CD4-positive, alpha-beta T cell (primary cell): ENCODE measurements at regions of chr15 and their contacts with region 1.

Region 1: GRCh38 chr15:31365655-31366127 is 39.1 kb downstream of the KLF13 start:
- DNase-seq: peak; percentile 59 to 90 (median 74)
- ATAC-seq: peak; percentile 51
- H3K4me3 ChIP-seq: peak overlapping the region; percentile 31
- H3K4me3 Mint-ChIP-seq: peak overlapping the region; percentile 82
- H3K27ac ChIP-seq: peak overlapping the region; percentile 72 to 86
- H3K27ac Mint-ChIP-seq: peak overlapping the region; percentile 90
- H3K4me1 ChIP-seq: peaks cover 98% of the 10 kb centered on the region
- H3K4me1 Mint-ChIP-seq: peaks cover 98% of the 10 kb centered on the region
- H3K27me3 ChIP-seq: no peaks in the 10 kb centered on the region
- H3K27me3 Mint-ChIP-seq: no peaks in the 10 kb centered on the region
- CTCF ChIP-seq: peak; percentile 58

Region 2: DNA sequence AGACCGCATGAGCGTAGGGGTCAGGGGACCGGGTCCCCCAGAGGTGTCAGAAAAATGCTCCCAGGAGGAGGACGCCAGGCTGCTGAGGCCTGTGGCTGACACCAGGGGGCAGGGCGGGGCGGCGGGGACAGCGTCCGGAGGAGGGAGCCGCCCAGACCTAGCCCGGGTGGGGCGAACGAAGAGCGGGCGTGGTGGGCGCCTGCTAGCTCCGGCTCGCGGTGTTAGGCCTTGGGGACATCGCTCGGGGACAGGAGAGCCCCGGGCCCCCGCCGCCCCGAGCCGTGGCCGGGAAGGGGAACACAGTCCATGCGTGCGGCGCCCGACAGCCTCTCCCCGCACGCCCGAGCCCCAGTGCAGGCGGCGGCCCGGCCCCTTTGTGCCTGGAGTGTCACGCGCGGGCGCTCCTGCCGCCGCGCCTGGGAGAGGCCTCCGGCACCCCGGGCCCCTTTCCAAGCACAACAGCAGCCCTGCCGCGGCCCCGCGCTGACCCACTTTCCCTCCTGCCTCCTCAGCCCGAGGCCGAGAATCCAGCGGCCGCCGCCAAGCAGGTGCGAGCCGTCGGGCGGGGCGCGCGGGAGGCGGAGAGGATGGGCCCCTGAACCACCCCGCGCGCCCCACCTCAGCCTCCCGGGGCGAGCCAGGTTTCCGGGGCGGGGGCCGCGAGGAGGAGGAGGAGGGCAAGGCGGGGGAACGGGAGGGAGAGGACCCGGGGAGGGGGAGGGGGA is 150.0 kb before region 1 on chr15:
- CTCF ChIA-PET with region 1: interaction called, 7 read pairs
- POLR2A ChIA-PET with region 1: interaction called, 12 read pairs
- intact Hi-C with region 1: loop called in 1 of 2 experiments (anchors 5 kb)
- DNase-seq: peak; percentile 60 to 86 (median 78)
- ATAC-seq: peak; percentile 69
- H3K4me3 ChIP-seq: peak overlapping the region; percentile 35
- H3K4me3 Mint-ChIP-seq: peak overlapping the region; percentile 70
- H3K27ac ChIP-seq: peak overlapping the region; percentile 55 to 70
- H3K27ac Mint-ChIP-seq: peak overlapping the region; percentile 94
- H3K4me1 ChIP-seq: peaks cover 32% of the 10 kb centered on the region
- H3K4me1 Mint-ChIP-seq: peaks cover 57% of the 10 kb centered on the region
- H3K27me3 ChIP-seq: no peaks in the 10 kb centered on the region
- H3K27me3 Mint-ChIP-seq: no peaks in the 10 kb centered on the region
- CTCF ChIP-seq: peak; percentile 83

Region 3: GRCh38 chr15:31280046-31280830 is 85.5 kb before region 1 on chr15:
- CTCF ChIA-PET with region 1: no interaction called
- POLR2A ChIA-PET with region 1: no interaction called
- intact Hi-C with region 1: no loop called
- DNase-seq: peak in 1 of 14 experiments; percentile 6
- ATAC-seq: no peak
- H3K4me3 ChIP-seq: no peak overlapping the region
- H3K4me3 Mint-ChIP-seq: no peak overlapping the region
- H3K27ac ChIP-seq: no peak overlapping the region
- H3K27ac Mint-ChIP-seq: no peak overlapping the region
- H3K4me1 ChIP-seq: peaks cover 8% of the 10 kb centered on the region
- H3K4me1 Mint-ChIP-seq: peaks cover 8% of the 10 kb centered on the region
- H3K27me3 ChIP-seq: no peaks in the 10 kb centered on the region
- H3K27me3 Mint-ChIP-seq: no peaks in the 10 kb centered on the region
- CTCF ChIP-seq: no peak

Region 4: DNA sequence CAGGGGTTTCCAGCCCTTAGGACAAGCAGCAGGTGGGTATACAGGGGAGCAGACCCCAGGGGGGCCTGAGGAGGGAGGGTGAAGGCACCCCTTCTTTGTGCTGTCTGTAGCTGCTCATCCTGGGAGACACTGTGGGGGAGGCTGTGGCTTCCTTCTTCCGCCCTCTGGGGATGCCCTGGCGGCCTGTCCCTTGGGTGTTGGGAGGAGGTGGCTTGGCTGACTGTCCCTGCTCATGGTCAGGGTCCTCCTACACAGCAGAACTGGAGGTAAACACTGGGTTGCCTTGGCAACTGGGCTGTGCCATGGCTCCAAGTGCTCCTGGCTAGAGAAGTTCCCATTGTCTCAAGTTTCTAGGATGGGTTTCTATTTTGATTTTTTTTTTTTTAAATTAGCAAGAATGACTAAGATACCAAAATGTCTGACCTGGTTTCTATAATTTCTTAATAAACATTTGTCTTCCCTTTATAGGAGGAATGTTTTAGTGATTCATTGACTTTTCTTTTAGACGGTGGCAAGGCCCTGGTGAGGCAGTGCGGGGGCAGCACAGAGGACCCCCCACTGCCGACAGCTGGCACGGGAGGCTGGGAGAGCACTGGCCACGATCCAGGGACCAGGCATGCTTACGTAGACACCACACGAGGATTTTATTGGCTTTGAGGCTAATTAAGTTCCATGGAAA is 26.7 kb before region 1 on chr15:
- CTCF ChIA-PET with region 1: interaction called, 4 read pairs
- POLR2A ChIA-PET with region 1: interaction called, 275 read pairs
- intact Hi-C with region 1: no loop called
- DNase-seq: peak in 4 of 14 experiments; percentile 38 to 66 (median 54)
- ATAC-seq: no peak
- H3K4me3 ChIP-seq: no peak overlapping the region
- H3K4me3 Mint-ChIP-seq: peak overlapping the region; percentile 56
- H3K27ac ChIP-seq: peak overlapping the region; percentile 68 to 86
- H3K27ac Mint-ChIP-seq: peak overlapping the region; percentile 80
- H3K4me1 ChIP-seq: peaks cover 100% of the 10 kb centered on the region
- H3K4me1 Mint-ChIP-seq: peaks cover 98% of the 10 kb centered on the region
- H3K27me3 ChIP-seq: no peaks in the 10 kb centered on the region
- H3K27me3 Mint-ChIP-seq: no peaks in the 10 kb centered on the region
- CTCF ChIP-seq: no peak

Region 5: DNA sequence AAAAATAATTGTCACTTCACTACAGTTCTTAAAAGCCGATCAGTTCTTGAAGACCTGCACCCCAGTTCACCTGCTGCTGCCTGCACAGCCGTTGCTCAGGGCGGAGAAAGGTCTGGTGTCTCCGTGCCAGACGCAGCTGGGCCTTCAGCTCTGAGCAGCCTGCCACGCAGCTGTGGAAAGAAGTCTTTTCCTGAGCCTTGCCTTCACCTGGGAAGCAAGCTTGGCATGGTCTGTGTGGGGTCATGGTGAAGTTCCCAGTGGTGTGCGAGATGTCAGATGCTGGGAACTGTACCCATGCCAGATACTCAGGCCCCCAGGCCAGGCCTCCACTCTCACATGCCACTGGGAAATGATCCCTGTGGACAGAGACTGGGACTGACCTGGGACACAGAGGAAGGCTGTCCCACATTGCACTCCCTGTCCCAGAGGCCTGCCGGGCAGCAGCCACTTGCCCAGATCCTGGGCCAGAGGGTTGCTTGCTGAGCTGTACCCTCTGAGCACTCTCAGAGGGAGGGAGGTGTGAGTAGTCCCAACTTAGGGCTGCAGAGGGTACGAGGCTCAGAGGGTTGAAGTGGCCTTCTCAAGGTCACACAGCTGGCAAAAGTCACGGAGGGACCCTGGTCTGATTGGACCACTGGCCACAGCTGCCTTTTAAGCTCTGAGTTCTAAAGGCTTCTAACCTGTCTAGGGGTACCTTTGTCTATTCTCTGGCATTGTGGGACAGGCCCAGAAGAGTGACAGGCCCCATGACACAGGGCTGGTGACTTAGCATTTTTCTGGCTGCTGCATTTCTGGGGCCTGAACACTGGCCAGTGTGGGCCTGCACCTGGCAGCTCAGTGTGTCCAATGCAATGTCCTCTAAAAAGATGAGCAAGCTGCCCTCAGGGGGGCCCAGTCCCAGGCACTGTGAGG is 16.4 kb after region 1 on chr15:
- CTCF ChIA-PET with region 1: interaction called, 5 read pairs
- POLR2A ChIA-PET with region 1: interaction called, 10 read pairs
- intact Hi-C with region 1: loop called in 1 of 2 experiments (anchors 2 kb)
- DNase-seq: no peak
- ATAC-seq: no peak
- H3K4me3 ChIP-seq: no peak overlapping the region
- H3K4me3 Mint-ChIP-seq: no peak overlapping the region
- H3K27ac ChIP-seq: peak overlapping the region in 1 of 2 donors; percentile 17
- H3K27ac Mint-ChIP-seq: peak overlapping the region; percentile 84
- H3K4me1 ChIP-seq: peaks cover 48% of the 10 kb centered on the region
- H3K4me1 Mint-ChIP-seq: peaks cover 53% of the 10 kb centered on the region
- H3K27me3 ChIP-seq: no peaks in the 10 kb centered on the region
- H3K27me3 Mint-ChIP-seq: no peaks in the 10 kb centered on the region
- CTCF ChIP-seq: no peak

Region 6: DNA sequence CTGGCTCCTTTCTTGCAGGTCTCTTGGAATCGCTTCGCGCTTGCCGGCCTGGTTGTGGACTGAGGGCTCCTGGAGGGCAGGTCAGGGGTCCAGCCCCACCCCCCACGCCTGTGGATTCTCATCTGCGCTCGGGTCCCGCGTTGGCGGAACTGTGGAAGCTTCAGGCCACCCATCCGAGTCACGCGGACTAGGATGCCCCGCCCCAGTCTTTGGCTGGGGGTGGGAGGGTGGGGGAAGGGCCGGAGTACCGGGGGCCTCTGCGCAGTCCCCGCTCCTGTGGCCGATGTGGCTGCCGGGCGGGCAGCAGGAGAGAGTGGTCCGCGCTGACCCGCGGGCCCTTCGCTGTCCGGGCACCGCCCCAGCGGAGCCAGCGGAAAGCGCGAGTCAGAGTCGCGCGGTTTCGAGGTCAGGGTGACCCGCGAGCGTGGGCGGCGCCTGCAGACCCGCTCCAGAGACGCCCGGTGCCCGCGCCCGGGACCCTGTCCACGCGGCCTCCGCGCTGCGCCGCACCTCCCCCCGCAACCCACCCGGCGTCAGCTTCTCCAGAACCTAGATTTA is 75.1 kb after region 1 on chr15:
- CTCF ChIA-PET with region 1: interaction called, 9 read pairs
- POLR2A ChIA-PET with region 1: interaction called, 216 read pairs
- intact Hi-C with region 1: loop called in 1 of 2 experiments (anchors 2 kb)
- DNase-seq: peak in 9 of 14 experiments; percentile 29 to 69 (median 51)
- ATAC-seq: peak; percentile 45
- H3K4me3 ChIP-seq: peak overlapping the region; percentile 48
- H3K4me3 Mint-ChIP-seq: peak overlapping the region; percentile 75
- H3K27ac ChIP-seq: peak overlapping the region; percentile 25 to 47
- H3K27ac Mint-ChIP-seq: peak overlapping the region; percentile 98
- H3K4me1 ChIP-seq: peaks cover 68% of the 10 kb centered on the region
- H3K4me1 Mint-ChIP-seq: peaks cover 61% of the 10 kb centered on the region
- H3K27me3 ChIP-seq: no peaks in the 10 kb centered on the region
- H3K27me3 Mint-ChIP-seq: no peaks in the 10 kb centered on the region
- CTCF ChIP-seq: no peak

Region 7: GRCh38 chr15:31488426-31489204 is 122.9 kb after region 1 on chr15:
- CTCF ChIA-PET with region 1: interaction called, 28 read pairs
- POLR2A ChIA-PET with region 1: interaction called, 38 read pairs
- intact Hi-C with region 1: loop called (anchors 1 to 2 kb)
- DNase-seq: peak in 9 of 14 experiments; percentile 16 to 89 (median 33)
- ATAC-seq: peak; percentile 64
- H3K4me3 ChIP-seq: no peak overlapping the region
- H3K4me3 Mint-ChIP-seq: peak overlapping the region; percentile 58
- H3K27ac ChIP-seq: no peak overlapping the region
- H3K27ac Mint-ChIP-seq: no peak overlapping the region
- H3K4me1 ChIP-seq: peaks cover 37% of the 10 kb centered on the region
- H3K4me1 Mint-ChIP-seq: peaks cover 29% of the 10 kb centered on the region
- H3K27me3 ChIP-seq: no peaks in the 10 kb centered on the region
- H3K27me3 Mint-ChIP-seq: no peaks in the 10 kb centered on the region
- CTCF ChIP-seq: peak; percentile 81